ENCODE measurements at regions of chr15 and their contacts with region 1.

Region 1: DNA sequence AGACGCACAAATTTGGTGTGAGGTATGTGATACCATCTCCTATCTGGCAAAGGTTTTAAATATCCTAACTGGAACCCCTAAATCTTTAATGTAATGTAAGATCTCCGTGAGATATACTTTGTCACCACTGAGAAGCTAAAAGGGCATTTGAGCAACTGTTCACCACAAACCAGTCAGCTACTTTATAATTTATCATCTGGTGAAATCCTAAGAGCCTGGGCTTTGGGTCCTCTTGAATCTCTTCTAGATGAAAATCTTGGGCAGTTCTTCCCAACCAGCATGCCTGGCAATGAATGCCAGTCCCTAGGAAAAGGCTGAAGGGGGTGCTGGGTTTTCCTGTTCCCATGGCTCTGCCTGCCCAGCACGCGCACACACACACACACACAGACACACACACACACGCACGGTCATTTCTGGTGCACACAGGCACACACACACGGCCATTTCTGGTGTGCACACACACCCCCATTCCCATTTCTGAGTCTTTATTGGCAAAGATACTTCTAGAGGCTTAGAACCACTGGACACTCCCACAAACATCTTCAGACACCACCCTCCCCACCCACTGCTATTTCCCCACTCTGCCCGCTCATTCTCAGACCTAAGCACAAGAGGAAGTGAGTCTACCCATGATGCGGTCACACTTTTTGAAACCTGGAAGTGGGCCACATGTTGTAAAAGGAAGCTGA is 72.6 kb downstream of the MYO1E start:
- DNase-seq: peak; percentile 90
- ATAC-seq: peak; percentile 87
- H3K4me3 Mint-ChIP-seq: peak overlapping the region; percentile 49
- H3K27ac Mint-ChIP-seq: peak overlapping the region; percentile 80
- H3K4me1 Mint-ChIP-seq: peaks cover 45% of the 10 kb centered on the region
- H3K27me3 Mint-ChIP-seq: peaks cover under 1% of the 10 kb centered on the region
- CTCF ChIP-seq: no peak

Region 2: GRCh38 chr15:59247364-59247763 is 52.7 kb before region 1 on chr15:
- CTCF ChIA-PET with region 1: interaction called, 12 read pairs
- POLR2A ChIA-PET with region 1: no interaction called
- intact Hi-C with region 1: no loop called
- DNase-seq: peak; percentile 79
- ATAC-seq: peak; percentile 69
- H3K4me3 Mint-ChIP-seq: no peak overlapping the region
- H3K27ac Mint-ChIP-seq: no peak overlapping the region
- H3K4me1 Mint-ChIP-seq: peaks cover 19% of the 10 kb centered on the region
- H3K27me3 Mint-ChIP-seq: peaks cover 2% of the 10 kb centered on the region
- CTCF ChIP-seq: peak; percentile 69

Region 3: GRCh38 chr15:59255647-59256380 is 44.3 kb before region 1 on chr15:
- CTCF ChIA-PET with region 1: no interaction called
- POLR2A ChIA-PET with region 1: no interaction called
- intact Hi-C with region 1: loop called (anchors 5 kb)
- DNase-seq: peak; percentile 60
- ATAC-seq: peak; percentile 48
- H3K4me3 Mint-ChIP-seq: no peak overlapping the region
- H3K27ac Mint-ChIP-seq: peak overlapping the region; percentile 1
- H3K4me1 Mint-ChIP-seq: peaks cover 34% of the 10 kb centered on the region
- H3K27me3 Mint-ChIP-seq: no peaks in the 10 kb centered on the region
- CTCF ChIP-seq: no peak

Region 4: GRCh38 chr15:59268168-59268979 is 31.7 kb before region 1 on chr15:
- CTCF ChIA-PET with region 1: no interaction called
- POLR2A ChIA-PET with region 1: no interaction called
- intact Hi-C with region 1: no loop called
- DNase-seq: no peak
- ATAC-seq: peak; percentile 51
- H3K4me3 Mint-ChIP-seq: no peak overlapping the region
- H3K27ac Mint-ChIP-seq: no peak overlapping the region
- H3K4me1 Mint-ChIP-seq: peaks cover 6% of the 10 kb centered on the region
- H3K27me3 Mint-ChIP-seq: peaks cover 2% of the 10 kb centered on the region
- CTCF ChIP-seq: no peak